Transverse colon (tissue), 4 donors: ENCODE measurements at regions of chr22 and their contacts with region 1.

Region 1: DNA sequence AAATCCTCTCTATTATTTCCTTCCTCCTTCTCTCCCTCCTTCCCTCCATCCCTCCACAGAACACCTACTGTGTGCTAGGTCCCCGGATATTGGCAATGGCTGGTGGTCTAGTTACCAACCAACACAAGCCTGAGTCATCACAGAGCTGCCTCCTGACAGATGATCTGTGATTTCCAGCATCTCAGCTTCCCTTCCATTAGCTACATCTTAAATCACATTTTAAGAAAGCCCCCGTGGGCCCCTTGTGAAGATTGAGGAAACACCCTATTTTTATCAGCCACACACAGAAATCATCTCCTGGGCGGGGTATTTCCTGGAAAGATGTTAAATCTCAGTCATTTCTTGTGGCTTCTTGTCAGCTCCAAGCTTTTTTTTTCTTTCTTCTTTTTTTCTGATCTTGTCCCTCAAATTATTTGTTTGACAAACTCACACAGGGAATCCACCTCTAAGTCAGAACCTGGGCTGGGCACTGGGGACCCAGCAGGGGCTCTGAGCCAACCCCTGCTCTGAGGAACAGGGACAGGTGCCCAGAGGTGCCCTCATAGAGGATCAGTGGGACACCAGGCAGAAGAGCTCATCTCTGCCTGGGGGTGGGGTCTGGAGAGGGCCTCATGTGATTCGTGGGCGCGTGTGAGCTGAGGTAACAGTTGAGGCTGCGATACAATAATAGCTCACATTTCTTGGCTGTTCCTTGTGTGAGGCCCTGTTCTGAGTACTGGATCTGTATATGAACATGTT is 42.4 kb downstream of the CACNA1I start:
- DNase-seq: no peak
- H3K4me3 ChIP-seq: no peak overlapping the region
- H3K27ac ChIP-seq: no peak overlapping the region
- H3K4me1 ChIP-seq: no peaks in the 10 kb centered on the region
- H3K27me3 ChIP-seq: peaks cover 28% of the 10 kb centered on the region
- CTCF ChIP-seq: no peak
- EP300 ChIP-seq: no peak
- POLR2A ChIP-seq: no peak

Region 2: GRCh38 chr22:39664485-39665200 is 51.7 kb after region 1 on chr22:
- in situ Hi-C with region 1: no loop called
- intact Hi-C with region 1: no loop called
- DNase-seq: peak; percentile 24
- H3K4me3 ChIP-seq: no peak overlapping the region
- H3K27ac ChIP-seq: no peak overlapping the region
- H3K4me1 ChIP-seq: peaks cover 0 to 27% (median 25%) of the 10 kb centered on the region in 4 donors
- H3K27me3 ChIP-seq: peaks cover 55% of the 10 kb centered on the region
- CTCF ChIP-seq: no peak
- EP300 ChIP-seq: no peak
- POLR2A ChIP-seq: no peak

Region 3: GRCh38 chr22:40024201-40025061 is 411.5 kb after region 1 on chr22:
- in situ Hi-C with region 1: loop called in 1 of 4 experiments (anchors 10 kb)
- intact Hi-C with region 1: no loop called
- DNase-seq: peak; percentile 82
- H3K4me3 ChIP-seq: no peak overlapping the region
- H3K27ac ChIP-seq: peak overlapping the region in 2 of 4 donors; percentile 21 to 23
- H3K4me1 ChIP-seq: peaks cover 4 to 23% (median 5%) of the 10 kb centered on the region in 4 donors
- H3K27me3 ChIP-seq: no peaks in the 10 kb centered on the region
- CTCF ChIP-seq: peak; percentile 71 to 91 (median 83)
- EP300 ChIP-seq: no peak
- POLR2A ChIP-seq: no peak

Region 4: GRCh38 chr22:41574847-41575381 is 1961.9 kb after region 1 on chr22:
- in situ Hi-C with region 1: no loop called
- intact Hi-C with region 1: loop called (anchors 5 kb)
- DNase-seq: peak; percentile 44
- H3K4me3 ChIP-seq: no peak overlapping the region
- H3K27ac ChIP-seq: peak overlapping the region in 2 of 4 donors; percentile 13 to 60
- H3K4me1 ChIP-seq: peaks cover 0 to 3% (median 0%) of the 10 kb centered on the region in 4 donors
- H3K27me3 ChIP-seq: no peaks in the 10 kb centered on the region
- CTCF ChIP-seq: no peak
- EP300 ChIP-seq: no peak
- POLR2A ChIP-seq: no peak